ENCODE measurements at regions of chr18 and their contacts with region 1.

Region 1: DNA sequence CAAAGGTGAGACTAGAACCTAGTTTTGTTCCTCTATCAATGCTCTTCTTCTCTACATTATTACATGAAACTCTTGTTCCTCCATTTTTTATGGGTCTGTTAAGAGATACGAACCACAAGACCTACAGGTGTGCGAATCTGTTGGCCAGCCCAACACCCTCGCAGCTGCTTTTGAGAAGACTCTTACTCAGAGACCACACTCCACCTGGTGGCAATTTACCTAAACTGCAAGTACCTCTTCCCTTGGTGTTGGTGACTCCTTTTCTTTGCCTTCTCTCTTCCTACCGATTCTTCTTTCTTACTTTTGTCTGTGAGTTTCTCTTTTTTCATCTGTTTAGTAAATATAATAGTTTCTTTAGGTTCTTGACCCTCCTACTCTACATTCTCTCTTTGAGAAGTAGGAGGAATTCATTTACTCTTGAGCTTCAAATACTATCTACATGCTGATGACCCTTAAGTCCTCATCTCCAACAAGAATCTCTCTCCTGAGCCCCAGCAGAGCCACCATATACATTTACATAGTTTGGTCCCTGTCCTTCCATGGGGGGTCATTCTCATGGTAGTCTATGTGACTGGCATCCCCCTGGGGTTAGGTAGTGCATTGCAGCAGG is 81.8 kb upstream of the GAREM1 start:
- DNase-seq: peak; percentile 65
- ATAC-seq: no peak
- H3K4me3 ChIP-seq: no peak overlapping the region
- H3K4me3 Mint-ChIP-seq: no peak overlapping the region
- H3K27ac ChIP-seq: no peak overlapping the region
- H3K27ac Mint-ChIP-seq: no peak overlapping the region
- H3K4me1 ChIP-seq: no peaks in the 10 kb centered on the region
- H3K4me1 Mint-ChIP-seq: peaks cover 1% of the 10 kb centered on the region
- H3K27me3 ChIP-seq: peaks cover 0 to 4% (median 0%) of the 10 kb centered on the region in 4 experiments
- H3K27me3 Mint-ChIP-seq: peaks cover 13% of the 10 kb centered on the region
- CTCF ChIP-seq: peak; percentile 86

Region 2: DNA sequence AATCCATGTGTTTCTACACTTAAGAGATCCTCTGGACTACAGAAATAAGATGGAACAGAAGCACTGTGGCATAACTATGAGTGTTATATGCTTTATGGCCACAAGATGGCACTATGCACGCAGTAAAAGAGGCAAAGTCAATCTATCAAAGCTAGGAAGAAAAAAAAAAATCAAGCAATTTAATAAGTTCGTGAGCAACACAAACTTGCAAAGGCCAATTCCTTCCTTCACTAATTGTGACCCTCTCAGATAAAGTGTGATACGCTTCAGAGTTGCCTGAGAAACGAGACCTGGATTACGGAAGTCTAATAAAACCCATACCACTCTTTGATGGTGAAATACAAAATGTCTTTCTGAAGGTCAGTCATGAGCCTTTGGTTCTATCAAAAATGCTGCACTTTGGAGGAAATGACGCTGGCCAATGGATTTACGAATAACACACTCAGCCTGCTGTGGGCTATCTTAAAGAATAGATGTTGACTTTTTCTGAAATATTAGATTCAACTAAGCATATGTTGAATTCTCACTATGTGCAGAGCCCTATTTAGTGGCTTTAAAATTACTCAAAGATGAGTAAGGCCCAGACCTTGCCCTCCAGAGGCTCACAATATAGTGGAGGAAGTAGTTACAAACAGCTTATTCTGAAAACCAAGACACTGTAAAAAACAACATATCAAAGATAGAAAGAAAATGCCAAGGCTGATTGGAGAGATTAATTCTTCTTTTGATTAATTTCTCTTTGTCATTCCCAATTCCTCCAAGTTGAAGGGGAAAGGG is 996.4 kb before region 1 on chr18:
- CTCF ChIA-PET with region 1: interaction called, 3 read pairs
- POLR2A ChIA-PET with region 1: no interaction called
- intact Hi-C with region 1: loop called (anchors 2 kb)
- DNase-seq: peak; percentile 66
- ATAC-seq: peak; percentile 39
- H3K4me3 ChIP-seq: no peak overlapping the region
- H3K4me3 Mint-ChIP-seq: no peak overlapping the region
- H3K27ac ChIP-seq: no peak overlapping the region
- H3K27ac Mint-ChIP-seq: no peak overlapping the region
- H3K4me1 ChIP-seq: no peaks in the 10 kb centered on the region
- H3K4me1 Mint-ChIP-seq: no peaks in the 10 kb centered on the region
- H3K27me3 ChIP-seq: peaks cover 0 to 2% (median 0%) of the 10 kb centered on the region in 4 experiments
- H3K27me3 Mint-ChIP-seq: peaks cover 8% of the 10 kb centered on the region
- CTCF ChIP-seq: peak; percentile 98

Region 3: DNA sequence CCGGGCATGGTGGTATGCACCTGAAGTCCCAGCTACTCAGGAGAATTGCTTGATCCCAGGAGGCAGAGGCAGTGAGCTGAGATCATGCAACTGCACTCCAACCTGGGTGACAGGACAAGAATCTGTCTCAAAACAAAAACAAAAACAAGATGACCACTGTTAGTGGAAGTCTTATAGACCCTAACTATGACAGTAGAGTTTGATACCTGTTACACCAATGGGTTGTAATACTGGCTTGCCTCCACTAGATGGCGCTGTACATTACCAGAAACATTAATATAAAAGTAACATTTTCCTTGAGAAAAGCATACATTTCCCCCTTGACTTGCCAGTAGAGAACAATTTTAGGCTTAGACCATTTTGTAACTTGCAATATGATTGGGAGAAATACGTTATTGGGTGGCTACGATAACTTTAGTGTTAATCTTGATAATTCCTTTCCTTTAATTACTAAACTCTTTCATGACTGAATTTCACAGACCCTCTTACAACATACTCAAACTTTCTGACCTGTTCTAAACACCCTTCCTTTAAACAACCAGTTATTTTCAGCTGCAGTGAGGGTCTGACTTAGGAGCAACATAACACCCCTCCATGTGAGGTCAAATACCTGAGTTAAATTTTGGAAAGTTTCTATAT is 811.3 kb before region 1 on chr18:
- CTCF ChIA-PET with region 1: no interaction called
- POLR2A ChIA-PET with region 1: no interaction called
- intact Hi-C with region 1: loop called (anchors 2 kb)
- DNase-seq: peak; percentile 61
- ATAC-seq: no peak
- H3K4me3 ChIP-seq: no peak overlapping the region
- H3K4me3 Mint-ChIP-seq: no peak overlapping the region
- H3K27ac ChIP-seq: no peak overlapping the region
- H3K27ac Mint-ChIP-seq: no peak overlapping the region
- H3K4me1 ChIP-seq: no peaks in the 10 kb centered on the region
- H3K4me1 Mint-ChIP-seq: no peaks in the 10 kb centered on the region
- H3K27me3 ChIP-seq: no peaks in the 10 kb centered on the region
- H3K27me3 Mint-ChIP-seq: no peaks in the 10 kb centered on the region
- CTCF ChIP-seq: peak; percentile 95

Region 4: GRCh38 chr18:31983020-31983419 is 569.5 kb before region 1 on chr18:
- CTCF ChIA-PET with region 1: no interaction called
- POLR2A ChIA-PET with region 1: no interaction called
- intact Hi-C with region 1: no loop called
- DNase-seq: no peak
- ATAC-seq: no peak
- H3K4me3 ChIP-seq: no peak overlapping the region
- H3K4me3 Mint-ChIP-seq: no peak overlapping the region
- H3K27ac ChIP-seq: no peak overlapping the region
- H3K27ac Mint-ChIP-seq: no peak overlapping the region
- H3K4me1 ChIP-seq: no peaks in the 10 kb centered on the region
- H3K4me1 Mint-ChIP-seq: no peaks in the 10 kb centered on the region
- H3K27me3 ChIP-seq: no peaks in the 10 kb centered on the region
- H3K27me3 Mint-ChIP-seq: no peaks in the 10 kb centered on the region
- CTCF ChIP-seq: no peak

Region 5: GRCh38 chr18:32158108-32158624 is 394.4 kb before region 1 on chr18:
- CTCF ChIA-PET with region 1: interaction called, 111 read pairs
- POLR2A ChIA-PET with region 1: no interaction called
- intact Hi-C with region 1: no loop called
- DNase-seq: peak; percentile 80
- ATAC-seq: peak; percentile 89
- H3K4me3 ChIP-seq: peak overlapping the region in 2 of 5 experiments; percentile 25 to 30
- H3K4me3 Mint-ChIP-seq: peak overlapping the region; percentile 50
- H3K27ac ChIP-seq: no peak overlapping the region
- H3K27ac Mint-ChIP-seq: no peak overlapping the region
- H3K4me1 ChIP-seq: peaks cover 4% of the 10 kb centered on the region in 2 donors
- H3K4me1 Mint-ChIP-seq: peaks cover 6% of the 10 kb centered on the region
- H3K27me3 ChIP-seq: peaks cover 0 to 13% (median 2%) of the 10 kb centered on the region in 4 experiments
- H3K27me3 Mint-ChIP-seq: peaks cover 4% of the 10 kb centered on the region
- CTCF ChIP-seq: peak; percentile 88

Region 6: GRCh38 chr18:32271672-32272208 is 280.8 kb before region 1 on chr18:
- CTCF ChIA-PET with region 1: interaction called, 3 read pairs
- POLR2A ChIA-PET with region 1: no interaction called
- intact Hi-C with region 1: loop called (anchors 10 kb)
- DNase-seq: no peak
- ATAC-seq: no peak
- H3K4me3 ChIP-seq: no peak overlapping the region
- H3K4me3 Mint-ChIP-seq: no peak overlapping the region
- H3K27ac ChIP-seq: no peak overlapping the region
- H3K27ac Mint-ChIP-seq: no peak overlapping the region
- H3K4me1 ChIP-seq: no peaks in the 10 kb centered on the region
- H3K4me1 Mint-ChIP-seq: no peaks in the 10 kb centered on the region
- H3K27me3 ChIP-seq: peaks cover 0 to 2% (median 0%) of the 10 kb centered on the region in 4 experiments
- H3K27me3 Mint-ChIP-seq: peaks cover 16% of the 10 kb centered on the region
- CTCF ChIP-seq: peak; percentile 58

Region 7: GRCh38 chr18:32454593-32454992 is 97.9 kb before region 1 on chr18:
- CTCF ChIA-PET with region 1: no interaction called
- POLR2A ChIA-PET with region 1: no interaction called
- intact Hi-C with region 1: no loop called
- DNase-seq: no peak
- ATAC-seq: no peak
- H3K4me3 ChIP-seq: no peak overlapping the region
- H3K4me3 Mint-ChIP-seq: no peak overlapping the region
- H3K27ac ChIP-seq: no peak overlapping the region
- H3K27ac Mint-ChIP-seq: no peak overlapping the region
- H3K4me1 ChIP-seq: no peaks in the 10 kb centered on the region
- H3K4me1 Mint-ChIP-seq: no peaks in the 10 kb centered on the region
- H3K27me3 ChIP-seq: peaks cover 0 to 7% (median 2%) of the 10 kb centered on the region in 4 experiments
- H3K27me3 Mint-ChIP-seq: peaks cover 32% of the 10 kb centered on the region
- CTCF ChIP-seq: no peak

Region 8: GRCh38 chr18:32566960-32567359 is 14.4 kb after region 1 on chr18:
- CTCF ChIA-PET with region 1: interaction called, 12 read pairs
- POLR2A ChIA-PET with region 1: no interaction called
- intact Hi-C with region 1: no loop called
- DNase-seq: no peak
- ATAC-seq: no peak
- H3K4me3 ChIP-seq: no peak overlapping the region
- H3K4me3 Mint-ChIP-seq: no peak overlapping the region
- H3K27ac ChIP-seq: no peak overlapping the region
- H3K27ac Mint-ChIP-seq: no peak overlapping the region
- H3K4me1 ChIP-seq: no peaks in the 10 kb centered on the region
- H3K4me1 Mint-ChIP-seq: no peaks in the 10 kb centered on the region
- H3K27me3 ChIP-seq: peaks cover 0 to 5% (median 0%) of the 10 kb centered on the region in 4 experiments
- H3K27me3 Mint-ChIP-seq: peaks cover 7% of the 10 kb centered on the region
- CTCF ChIP-seq: no peak